ENCODE measurements at regions of chr6 and their contacts with region 1.

Region 1: DNA sequence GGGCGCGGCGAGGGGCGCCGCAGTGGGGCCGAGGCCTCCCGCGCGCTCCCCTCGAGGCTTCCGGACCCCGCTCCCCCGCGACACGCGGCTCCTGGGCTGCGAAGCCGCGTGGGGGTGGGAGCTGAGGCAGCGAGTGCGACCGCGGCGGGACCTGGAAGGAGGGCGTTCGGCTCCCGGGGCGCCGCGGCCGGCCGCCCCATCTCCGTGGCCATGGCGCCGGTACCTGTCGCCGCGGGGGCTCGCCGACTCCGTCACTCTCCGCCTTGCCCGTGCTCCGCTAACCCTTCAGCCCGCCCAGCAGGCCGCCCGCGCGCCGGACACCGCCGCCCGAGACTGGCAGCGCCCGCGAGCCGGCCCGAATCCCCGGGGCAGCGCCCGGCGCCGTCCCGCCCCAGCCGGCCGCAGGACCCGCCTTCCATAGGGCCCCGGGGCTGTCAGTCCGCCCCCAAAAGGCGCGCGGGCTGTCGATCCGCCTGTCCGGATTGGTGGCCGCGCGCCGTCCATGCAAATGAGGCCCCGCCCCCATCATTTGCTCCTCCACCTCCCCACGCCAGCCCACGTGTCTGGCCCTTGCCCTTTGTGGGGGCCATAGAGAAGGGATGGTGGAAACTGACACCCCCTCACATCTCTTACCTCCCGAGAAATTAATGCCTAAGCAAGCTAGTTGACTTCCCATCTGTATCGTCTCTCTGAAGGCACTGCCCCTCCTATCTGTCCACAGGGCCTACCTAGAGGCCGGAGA is at the start of gene FKBP5:
- DNase-seq: peak; percentile 92
- H3K4me3 Mint-ChIP-seq: peak within 1 kb of the TSS; percentile 97
- H3K27ac Mint-ChIP-seq: peak within 1 kb of the TSS; percentile 94
- H3K4me1 Mint-ChIP-seq: peaks cover 16% of the 10 kb centered on the region
- H3K27me3 Mint-ChIP-seq: no peaks in the 10 kb centered on the region
- total RNA-seq, gene FKBP5: 202 to 208 TPM

Region 2: GRCh38 chr6:35601331-35602132 is 87.2 kb before region 1 on chr6:
- CTCF ChIA-PET with region 1: no interaction called
- intact Hi-C with region 1: loop called (anchors 2 kb)
- DNase-seq: peak; percentile 78
- H3K4me3 Mint-ChIP-seq: peak overlapping the region; percentile 58
- H3K27ac Mint-ChIP-seq: peak overlapping the region; percentile 80
- H3K4me1 Mint-ChIP-seq: peaks cover 79% of the 10 kb centered on the region
- H3K27me3 Mint-ChIP-seq: no peaks in the 10 kb centered on the region

Region 3: GRCh38 chr6:35669451-35670045 is 19.2 kb before region 1 on chr6:
- CTCF ChIA-PET with region 1: interaction called, 7 read pairs
- intact Hi-C with region 1: loop called (anchors 1 kb)
- DNase-seq: no peak
- H3K4me3 Mint-ChIP-seq: peak overlapping the region; percentile 56
- H3K27ac Mint-ChIP-seq: peak overlapping the region; percentile 96
- H3K4me1 Mint-ChIP-seq: peaks cover 59% of the 10 kb centered on the region
- H3K27me3 Mint-ChIP-seq: no peaks in the 10 kb centered on the region

Region 4: DNA sequence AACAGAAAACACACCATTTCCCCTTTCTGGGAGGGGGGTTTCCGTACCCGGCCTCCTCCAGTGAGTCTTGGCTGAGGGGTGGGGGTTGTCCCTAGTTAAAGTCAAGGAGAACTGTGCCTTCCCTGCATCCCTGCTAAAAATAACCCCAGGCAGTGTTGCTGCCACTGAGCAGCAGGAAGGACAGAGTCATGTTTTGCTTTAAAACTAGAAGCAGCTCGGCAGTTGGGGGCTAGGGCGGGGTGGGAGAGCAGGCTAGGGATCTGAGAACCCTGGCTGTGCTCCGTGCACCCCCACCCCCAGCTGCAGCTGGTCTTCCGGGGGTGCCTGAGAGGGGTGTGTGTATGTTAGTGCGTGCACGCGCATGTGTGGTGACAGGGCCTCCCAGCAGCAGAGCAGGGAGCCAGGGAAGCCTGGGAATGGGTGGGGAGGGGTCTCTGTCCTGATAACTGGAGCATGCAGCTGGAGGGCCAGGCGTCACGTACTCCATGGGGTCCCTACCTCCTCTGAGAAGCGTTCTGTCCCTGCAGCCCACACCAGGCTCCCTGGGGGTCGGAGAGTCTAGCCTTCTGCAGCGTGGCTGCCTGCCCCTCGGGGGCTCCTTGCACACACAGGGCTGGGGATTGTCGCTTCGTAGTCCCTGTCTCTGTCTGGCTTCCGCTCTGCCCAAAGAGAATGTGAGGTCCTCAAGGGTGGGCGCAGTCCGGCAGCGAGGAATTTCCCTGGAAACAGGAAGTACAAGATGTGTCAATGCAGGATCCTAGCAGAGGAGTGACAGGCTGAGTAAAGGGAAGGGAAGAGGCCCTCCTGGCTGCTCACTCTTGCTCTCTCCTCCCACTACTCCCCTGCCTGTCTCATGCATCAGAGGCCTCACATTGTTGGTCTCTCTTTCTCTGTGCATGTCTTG is 31.3 kb after region 1 on chr6:
- CTCF ChIA-PET with region 1: interaction called, 3 read pairs
- intact Hi-C with region 1: loop called (anchors 1 kb)
- DNase-seq: peak; percentile 84
- H3K4me3 Mint-ChIP-seq: peak overlapping the region; percentile 80
- H3K27ac Mint-ChIP-seq: peak overlapping the region; percentile 91
- H3K4me1 Mint-ChIP-seq: peaks cover 74% of the 10 kb centered on the region
- H3K27me3 Mint-ChIP-seq: no peaks in the 10 kb centered on the region

Measured in activated naive CD4-positive, alpha-beta T cell treated with anti-CD3 and anti-CD28 coated beads for 36 hours (primary cell).